ENCODE measurements at regions of chr16 and their contacts with region 1.

Region 1: DNA sequence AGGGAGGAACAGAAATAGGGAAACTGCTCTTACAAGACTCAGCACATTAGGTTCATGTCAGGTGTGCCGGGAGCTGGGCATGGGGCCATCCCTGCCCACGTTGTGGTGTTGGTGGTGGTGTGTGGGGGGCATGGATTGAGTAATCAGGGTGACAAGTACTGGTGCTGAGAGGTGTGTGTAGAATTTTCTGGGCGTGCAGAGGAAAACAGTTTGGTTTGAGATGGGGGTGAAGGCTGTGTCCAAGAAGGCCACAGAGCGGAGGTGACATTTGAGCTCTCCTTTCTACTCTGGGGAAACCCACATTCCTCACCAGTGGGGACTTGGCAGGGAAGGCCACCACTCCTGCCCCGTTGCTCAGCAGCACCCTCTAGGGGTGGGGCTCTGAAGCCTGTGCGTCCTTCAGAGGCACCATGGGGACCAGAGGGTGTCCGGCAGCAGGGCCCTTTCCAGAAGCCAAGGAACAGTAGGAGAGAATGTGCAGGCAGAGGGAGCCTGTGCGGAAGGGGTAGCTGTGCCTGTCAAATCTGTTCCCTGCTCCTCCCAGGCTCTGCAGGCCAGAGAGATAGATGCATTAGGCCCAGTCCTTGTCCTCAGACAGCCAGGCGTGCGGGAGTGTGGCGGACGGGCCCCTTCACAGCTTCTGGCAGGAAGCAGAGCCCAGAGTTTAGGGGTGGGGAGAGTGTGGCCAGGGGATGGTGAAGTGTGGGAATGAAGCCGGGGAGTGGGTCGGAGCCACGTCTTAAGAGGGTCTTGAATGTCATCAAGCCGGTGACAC is 48.7 kb upstream of the GSE1 start:
- DNase-seq: no peak
- H3K4me3 ChIP-seq: no peak overlapping the region
- CTCF ChIP-seq: peak; percentile 56

Region 2: DNA sequence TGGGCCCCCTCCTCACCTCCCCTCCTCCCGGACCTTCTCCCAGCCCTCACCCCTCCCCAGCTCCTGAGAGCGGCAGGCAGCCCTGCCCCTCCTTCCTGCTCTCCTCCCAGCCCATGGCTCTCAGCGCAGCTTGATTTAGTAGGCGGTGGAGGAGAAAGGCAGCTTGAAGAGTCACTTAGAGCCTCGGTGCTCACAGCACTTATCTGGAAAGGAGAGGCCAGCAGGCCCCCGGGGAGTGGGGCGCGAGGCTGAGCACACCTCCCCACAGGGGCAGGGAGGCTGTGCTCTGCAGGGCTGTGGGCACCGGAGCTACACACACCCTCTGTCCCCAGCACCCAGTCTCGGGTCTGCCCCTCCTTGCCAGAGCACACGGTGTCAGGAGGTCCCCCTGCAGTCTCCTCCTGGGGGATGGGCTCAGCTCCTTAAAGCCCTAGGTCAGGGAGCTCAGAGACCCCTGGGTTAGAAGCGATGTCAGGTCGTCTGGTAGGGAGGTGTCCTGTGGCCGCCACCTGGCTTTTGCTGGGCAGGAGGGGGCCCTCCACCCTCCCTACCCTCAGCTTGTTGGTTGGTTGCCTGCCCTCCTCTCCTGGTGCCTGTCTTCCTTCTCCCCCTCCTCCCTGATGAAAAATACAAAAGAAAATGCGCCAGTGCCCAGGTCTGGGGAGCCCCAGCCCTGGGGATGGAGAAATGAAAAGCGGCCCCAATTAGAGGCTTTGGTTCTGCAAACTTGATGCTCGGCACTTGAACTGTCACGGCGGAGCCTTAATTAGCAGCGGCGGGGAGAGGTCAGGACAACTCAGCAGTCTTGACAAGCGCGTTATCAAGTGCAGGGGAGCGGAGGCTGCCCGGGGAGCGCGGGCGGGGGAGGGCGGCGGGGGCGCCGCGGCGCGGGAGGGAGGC is 102.4 kb before region 1 on chr16:
- CTCF ChIA-PET with region 1: no interaction called
- POLR2A ChIA-PET with region 1: no interaction called
- DNase-seq: no peak
- H3K4me3 ChIP-seq: peak overlapping the region; percentile 36
- CTCF ChIP-seq: no peak

Region 3: DNA sequence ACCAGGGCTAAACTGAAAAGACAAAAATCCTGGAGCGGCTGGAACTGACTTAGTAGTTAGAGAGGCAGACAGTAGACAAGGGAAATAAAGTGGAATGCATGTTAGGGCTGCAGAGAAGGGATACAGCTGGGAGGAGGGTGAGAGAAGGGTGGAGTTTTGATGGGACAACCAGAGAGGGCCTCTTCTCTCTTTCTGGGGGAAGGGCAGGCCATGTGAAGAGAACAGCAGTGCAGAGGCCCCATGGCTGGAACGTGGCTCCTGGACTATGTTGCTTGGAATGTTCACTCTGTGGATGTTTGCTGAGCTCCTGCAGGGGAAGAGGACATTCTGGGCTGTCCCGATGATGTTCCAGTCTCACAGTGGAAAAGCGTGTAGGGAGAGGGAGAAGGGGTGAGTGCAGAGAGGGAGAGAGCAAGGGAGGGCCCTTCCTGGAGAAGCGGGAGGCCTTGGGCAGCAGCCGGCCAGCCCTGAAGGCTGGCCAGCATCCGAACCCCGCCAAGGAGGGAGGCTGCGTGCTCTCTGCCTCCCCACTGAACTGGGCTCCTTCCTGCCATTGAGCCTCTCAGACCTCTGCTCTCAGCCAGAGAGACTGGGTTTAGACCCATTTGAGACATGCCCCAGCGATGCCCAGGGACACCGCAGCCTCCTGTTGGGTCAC is 15.6 kb after region 1 on chr16:
- CTCF ChIA-PET with region 1: interaction called, 14 read pairs
- POLR2A ChIA-PET with region 1: no interaction called
- DNase-seq: no peak
- H3K4me3 ChIP-seq: no peak overlapping the region
- CTCF ChIP-seq: no peak

Measured in AG04449 (cell line).